ENCODE measurements at regions of chr19 and their contacts with region 1.

Region 1: GRCh38 chr19:47713046-47714021 is at the start of gene EHD2:
- DNase-seq: peak in 5 of 10 donors; percentile 41 to 92 (median 59)

Region 2: DNA sequence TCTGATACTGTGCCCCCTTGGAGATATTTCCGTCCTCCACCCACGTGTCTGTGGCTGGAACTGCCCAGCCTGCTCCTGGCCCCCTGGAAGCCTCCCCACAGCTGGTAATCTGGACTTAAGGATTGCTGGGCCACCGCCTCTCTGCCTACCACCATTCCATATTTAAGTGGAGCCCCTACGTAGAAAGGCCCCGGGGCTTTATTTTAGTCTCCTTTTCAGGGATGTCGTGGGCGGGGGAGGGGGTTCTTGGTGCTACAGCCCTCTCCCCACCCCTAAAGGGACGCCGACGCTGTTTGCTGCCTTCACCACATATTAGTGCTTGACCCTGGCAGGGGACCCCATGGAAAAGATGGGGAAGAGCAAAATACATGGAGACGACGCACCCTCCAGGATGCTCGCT is 29.3 kb after region 1 on chr19:
- intact Hi-C with region 1: loop called (anchors 1 kb)
- DNase-seq: peak in 1 of 10 donors; percentile 69